ENCODE measurements at regions of chr10 and their contacts with region 1.

Region 1: GRCh38 chr10:123126246-123126645 is 9.5 kb upstream of the HMX3 start:
- DNase-seq: no peak
- ATAC-seq: no peak
- H3K4me3 ChIP-seq: no peak overlapping the region
- H3K27ac ChIP-seq: no peak overlapping the region
- H3K4me1 ChIP-seq: no peaks in the 10 kb centered on the region
- CTCF ChIP-seq: no peak
- EP300 ChIP-seq: no peak
- POLR2A ChIP-seq: no peak
- RAD21 ChIP-seq: no peak

Region 2: GRCh38 chr10:122181055-122181732 is 945.1 kb before region 1 on chr10:
- CTCF ChIA-PET with region 1: no interaction called
- POLR2A ChIA-PET with region 1: interaction called, 12 read pairs
- DNase-seq: peak in 1 of 2 experiments; percentile 42
- ATAC-seq: peak in 1 of 2 experiments; percentile 19; a peak in 2 of 6 replicates
- H3K4me3 ChIP-seq: no peak overlapping the region
- H3K27ac ChIP-seq: peak overlapping the region; percentile 59 to 82; a peak in 5 of 6 replicates
- H3K4me1 ChIP-seq: peaks cover 62% of the 10 kb centered on the region
- CTCF ChIP-seq: no peak
- EP300 ChIP-seq: no peak
- POLR2A ChIP-seq: no peak
- RAD21 ChIP-seq: no peak

Region 3: DNA sequence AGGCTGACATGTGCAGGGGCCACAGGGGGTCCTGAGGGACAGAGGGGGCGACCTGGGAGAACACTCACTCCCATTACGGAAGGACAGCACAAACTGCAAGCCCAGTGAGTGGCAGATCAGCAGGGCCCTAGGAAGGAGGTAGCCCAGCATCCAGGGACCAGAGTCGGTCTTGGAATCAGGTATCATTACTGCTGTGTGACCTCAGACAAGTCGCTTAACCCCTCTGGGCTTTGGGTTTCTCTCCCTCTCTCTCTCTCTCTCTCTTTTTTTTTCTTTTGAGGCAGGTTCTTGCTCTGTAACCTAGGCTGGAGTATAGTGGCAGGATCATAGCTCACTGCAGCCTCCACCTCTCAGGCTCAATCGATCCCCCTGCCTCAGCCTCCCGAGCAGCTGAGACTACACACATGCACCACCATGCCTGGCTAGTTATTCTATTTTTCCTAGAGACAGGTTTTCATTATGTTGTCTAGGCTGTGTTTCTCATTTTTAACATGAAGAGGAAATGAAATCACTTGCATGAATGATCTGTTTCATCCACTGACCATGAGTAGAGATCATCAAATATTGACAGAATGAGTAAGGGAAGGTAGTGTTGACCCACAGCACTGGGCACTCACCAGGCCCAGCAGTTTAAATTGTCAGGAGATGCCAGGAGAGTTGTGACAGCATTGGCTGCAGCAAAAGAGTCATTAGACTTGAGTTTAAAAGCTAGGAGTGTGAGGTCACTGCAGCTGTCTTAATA is 77.3 kb after region 1 on chr10:
- CTCF ChIA-PET with region 1: no interaction called
- POLR2A ChIA-PET with region 1: no interaction called
- DNase-seq: peak; percentile 8 to 67
- ATAC-seq: peak; percentile 92 to 93
- H3K4me3 ChIP-seq: no peak overlapping the region
- H3K27ac ChIP-seq: peak overlapping the region; percentile 48 to 51; a peak in 4 of 6 replicates
- H3K4me1 ChIP-seq: peaks cover 17% of the 10 kb centered on the region
- CTCF ChIP-seq: no peak
- EP300 ChIP-seq: no peak
- POLR2A ChIP-seq: no peak
- RAD21 ChIP-seq: no peak

Measured in A549 (cell line).